Activated CD4-positive, alpha-beta memory T cell treated with anti-CD3 and anti-CD28 coated beads, Interleukin-2, amount 10 ng/mL, durations not matched to agents 7 days and 5 days (primary cell): ENCODE measurements at regions of chr2 and their contacts with region 1.

Region 1: DNA sequence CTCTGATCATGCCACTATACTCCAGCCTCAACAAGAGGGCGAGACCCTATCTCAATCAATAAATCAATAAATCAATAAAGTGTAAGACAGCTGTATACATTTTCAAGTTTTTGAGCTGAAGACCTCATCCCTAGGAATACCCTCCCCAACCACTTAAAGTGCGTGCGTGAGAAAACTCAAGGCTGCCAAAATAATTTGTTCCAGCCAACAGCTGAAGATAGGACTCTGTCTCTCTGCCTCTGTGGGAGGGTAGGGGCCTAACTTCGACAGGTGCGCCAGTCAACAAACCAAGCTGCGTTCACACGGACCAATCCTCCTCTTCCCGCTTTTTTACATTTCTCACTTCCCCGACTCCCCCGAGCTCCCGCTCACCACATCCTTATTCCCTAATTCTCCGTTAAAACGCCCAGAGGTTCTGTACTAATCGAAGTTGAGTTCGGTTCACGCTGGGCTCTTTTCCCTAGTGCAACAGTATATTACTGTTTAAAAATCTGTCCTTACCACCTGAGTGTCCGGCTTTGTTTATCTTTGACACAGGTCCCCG is 618 bp downstream of the POLR2D start:
- DNase-seq: peak; percentile 24
- H3K4me3 Mint-ChIP-seq: peak overlapping the region; percentile 90
- H3K27ac Mint-ChIP-seq: peak overlapping the region; percentile 73
- H3K4me1 Mint-ChIP-seq: peaks cover 50% of the 10 kb centered on the region
- H3K27me3 Mint-ChIP-seq: no peaks in the 10 kb centered on the region

Region 2: GRCh38 chr2:127790694-127791529 is 66.4 kb before region 1 on chr2:
- CTCF ChIA-PET with region 1: no interaction called
- POLR2A ChIA-PET with region 1: no interaction called
- DNase-seq: no peak
- H3K4me3 Mint-ChIP-seq: no peak overlapping the region
- H3K27ac Mint-ChIP-seq: no peak overlapping the region
- H3K4me1 Mint-ChIP-seq: peaks cover 7% of the 10 kb centered on the region
- H3K27me3 Mint-ChIP-seq: no peaks in the 10 kb centered on the region

Region 3: DNA sequence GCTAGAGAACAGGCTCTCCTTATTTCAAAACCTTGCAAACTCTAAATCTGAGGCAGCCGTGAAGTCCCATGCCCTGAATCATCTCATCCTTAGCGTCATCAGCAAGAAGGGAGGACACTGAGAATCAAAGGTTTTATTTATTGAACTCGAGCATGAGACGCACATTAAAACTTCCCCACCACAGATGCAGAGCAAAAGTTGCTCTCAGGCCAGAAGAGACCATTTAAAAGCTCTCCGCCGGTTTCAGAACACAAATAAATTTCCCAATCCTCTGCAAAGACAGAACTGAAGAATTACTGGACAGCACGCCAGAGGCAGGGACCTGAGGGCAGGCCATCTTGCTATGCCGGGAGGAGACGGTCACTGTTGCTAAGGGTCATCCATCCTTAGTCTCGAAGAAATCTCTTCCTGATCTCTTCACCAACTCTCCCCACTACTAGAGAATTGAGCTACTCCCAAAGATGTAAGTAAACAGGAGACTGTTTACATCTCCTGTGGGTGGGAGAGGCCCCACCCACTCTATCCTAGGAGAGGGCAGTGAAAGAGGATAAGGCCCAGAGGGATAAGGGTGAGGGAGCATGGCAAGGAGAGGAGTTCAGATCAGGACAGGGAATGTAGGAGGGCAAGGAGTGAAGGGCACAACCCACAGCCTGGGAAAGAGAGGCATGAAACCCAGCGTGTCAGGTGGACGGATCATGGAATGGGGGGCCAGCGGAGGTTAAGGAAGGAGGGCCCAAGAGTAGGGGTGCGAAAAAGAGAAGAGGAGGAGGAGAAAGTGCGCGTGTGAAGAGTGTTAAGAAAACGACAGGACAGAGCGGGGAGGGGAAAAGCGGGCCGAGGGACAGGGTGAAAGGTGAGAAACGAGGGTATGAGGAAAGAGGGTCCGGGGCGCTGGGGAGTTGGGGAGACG is 27.4 kb after region 1 on chr2:
- CTCF ChIA-PET with region 1: interaction called, 11 read pairs
- POLR2A ChIA-PET with region 1: interaction called, 7 read pairs
- DNase-seq: no peak
- H3K4me3 Mint-ChIP-seq: peak overlapping the region; percentile 84
- H3K27ac Mint-ChIP-seq: peak overlapping the region; percentile 68
- H3K4me1 Mint-ChIP-seq: peaks cover 41% of the 10 kb centered on the region
- H3K27me3 Mint-ChIP-seq: no peaks in the 10 kb centered on the region

Region 4: GRCh38 chr2:127953128-127953718 is 95.9 kb after region 1 on chr2:
- CTCF ChIA-PET with region 1: no interaction called
- POLR2A ChIA-PET with region 1: no interaction called
- DNase-seq: no peak
- H3K4me3 Mint-ChIP-seq: no peak overlapping the region
- H3K27ac Mint-ChIP-seq: no peak overlapping the region
- H3K4me1 Mint-ChIP-seq: peaks cover 6% of the 10 kb centered on the region
- H3K27me3 Mint-ChIP-seq: no peaks in the 10 kb centered on the region